ENCODE measurements at regions of chr4 and their contacts with region 1.

Region 1: DNA sequence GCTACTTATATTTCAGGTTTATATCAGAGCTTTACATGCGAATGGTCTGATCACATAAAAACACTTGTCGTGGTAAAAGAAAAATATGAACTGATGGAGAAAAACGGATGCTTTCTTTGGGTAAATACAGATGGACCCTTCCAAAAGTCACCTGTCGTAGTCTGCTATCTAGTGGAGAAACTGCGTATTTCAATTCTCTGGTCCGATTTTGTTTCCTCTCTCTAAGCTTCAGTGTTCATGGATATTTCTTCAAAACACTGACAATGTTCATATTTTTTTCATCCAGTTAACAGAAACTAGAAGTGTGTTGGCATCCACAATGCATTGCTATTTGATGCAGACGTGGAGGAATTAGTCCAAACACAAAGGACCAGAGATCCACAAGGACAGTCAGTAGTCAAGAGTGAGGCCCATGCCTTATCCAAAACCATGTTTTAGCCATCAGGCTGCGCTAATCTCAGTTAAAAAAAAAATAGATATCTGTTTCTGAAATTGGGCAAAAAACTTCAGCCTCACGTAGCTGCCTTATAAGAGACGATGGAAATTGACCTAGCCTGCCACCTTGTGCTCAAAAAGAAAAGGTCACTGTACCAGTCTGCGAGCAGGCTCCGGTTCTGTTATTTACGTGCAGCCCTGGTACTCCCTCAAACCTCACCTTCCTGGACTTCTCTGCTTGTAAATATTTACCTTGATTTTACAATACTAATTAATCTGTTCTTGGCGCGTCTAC is 16.0 kb downstream of the MEPE start:
- DNase-seq: peak; percentile 39
- ATAC-seq: peak; percentile 82 to 86

Region 2: DNA sequence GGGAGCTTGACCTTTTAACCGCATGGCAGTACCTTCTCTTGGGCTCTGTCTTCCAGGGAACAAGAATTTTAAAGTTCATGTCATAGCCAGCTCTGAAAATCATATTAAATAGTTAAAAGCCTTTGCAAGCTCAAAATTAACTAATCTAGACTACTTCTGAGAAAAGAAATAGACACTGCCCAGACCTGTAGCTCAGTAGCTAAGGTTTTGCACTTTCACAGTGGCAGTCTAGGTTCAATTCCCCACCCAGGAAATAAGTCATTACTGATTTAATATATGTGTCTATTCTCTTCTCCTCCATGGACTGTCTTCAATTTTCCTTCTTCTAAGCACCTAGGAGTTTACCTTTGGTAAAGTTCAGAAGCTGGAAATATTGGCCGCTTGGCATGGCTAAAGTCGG is 485.2 kb before region 1 on chr4:
- intact Hi-C with region 1: loop called in 1 of 2 experiments (anchors 5 kb)
- DNase-seq: no peak
- ATAC-seq: no peak

Region 3: GRCh38 chr4:87375719-87376291 is 473.0 kb before region 1 on chr4:
- intact Hi-C with region 1: loop called in 1 of 2 experiments (anchors 10 kb)
- DNase-seq: peak; percentile 34
- ATAC-seq: peak; percentile 77 to 86

Region 4: GRCh38 chr4:87543835-87544461 is 304.8 kb before region 1 on chr4:
- intact Hi-C with region 1: loop called (anchors 5 to 10 kb)
- DNase-seq: no peak
- ATAC-seq: peak; percentile 52 to 71

Region 5: GRCh38 chr4:87679449-87680169 is 169.2 kb before region 1 on chr4:
- intact Hi-C with region 1: loop called (anchors 2 to 5 kb)
- DNase-seq: peak; percentile 60
- ATAC-seq: peak; percentile 78 to 81

Region 6: GRCh38 chr4:87973283-87974169 is 124.7 kb after region 1 on chr4:
- intact Hi-C with region 1: loop called in 1 of 2 experiments (anchors 2 kb)
- DNase-seq: peak; percentile 44
- ATAC-seq: peak in 1 of 2 donors; percentile 75

Region 7: DNA sequence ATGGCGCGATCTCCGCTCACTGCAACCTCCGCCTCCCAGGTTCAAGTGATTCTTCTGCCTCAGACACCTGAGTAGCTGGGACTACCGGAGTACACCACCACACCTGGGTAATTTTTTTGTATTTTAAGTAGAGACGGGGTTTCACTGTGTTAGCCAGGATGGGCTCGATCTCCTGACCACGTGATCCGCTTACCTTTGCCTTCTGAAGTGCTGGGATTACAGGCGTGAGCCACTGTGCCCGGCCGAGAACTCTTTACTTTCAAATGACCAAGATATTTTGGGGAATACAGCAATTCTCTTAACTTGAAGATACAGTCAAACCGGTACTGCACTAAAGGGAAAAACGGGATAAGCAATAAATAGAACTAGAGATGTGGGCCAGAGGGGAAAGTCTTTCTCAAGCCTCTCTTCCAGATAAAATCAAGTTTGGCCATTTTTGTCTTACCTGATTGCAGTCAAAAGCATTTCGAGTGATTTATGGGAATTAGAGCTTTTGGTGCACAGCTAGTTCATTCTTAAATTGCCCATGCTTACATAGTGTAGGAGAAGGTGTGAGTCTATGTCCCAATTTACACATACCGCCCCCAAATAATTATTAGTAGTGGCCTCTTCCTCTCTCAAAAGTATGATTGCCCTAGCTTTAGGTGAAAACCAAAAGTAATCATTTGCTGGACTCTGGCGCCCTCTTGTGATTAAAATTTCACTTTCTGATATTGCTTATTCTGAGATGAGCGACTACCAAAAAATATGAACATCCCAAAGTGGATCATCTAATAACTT is 362.9 kb after region 1 on chr4:
- intact Hi-C with region 1: loop called in 1 of 2 experiments (anchors 5 kb)
- DNase-seq: no peak
- ATAC-seq: peak; percentile 59 to 82